Transverse colon (tissue), 4 donors: ENCODE measurements at regions of chr13 and their contacts with region 1.

Region 1: DNA sequence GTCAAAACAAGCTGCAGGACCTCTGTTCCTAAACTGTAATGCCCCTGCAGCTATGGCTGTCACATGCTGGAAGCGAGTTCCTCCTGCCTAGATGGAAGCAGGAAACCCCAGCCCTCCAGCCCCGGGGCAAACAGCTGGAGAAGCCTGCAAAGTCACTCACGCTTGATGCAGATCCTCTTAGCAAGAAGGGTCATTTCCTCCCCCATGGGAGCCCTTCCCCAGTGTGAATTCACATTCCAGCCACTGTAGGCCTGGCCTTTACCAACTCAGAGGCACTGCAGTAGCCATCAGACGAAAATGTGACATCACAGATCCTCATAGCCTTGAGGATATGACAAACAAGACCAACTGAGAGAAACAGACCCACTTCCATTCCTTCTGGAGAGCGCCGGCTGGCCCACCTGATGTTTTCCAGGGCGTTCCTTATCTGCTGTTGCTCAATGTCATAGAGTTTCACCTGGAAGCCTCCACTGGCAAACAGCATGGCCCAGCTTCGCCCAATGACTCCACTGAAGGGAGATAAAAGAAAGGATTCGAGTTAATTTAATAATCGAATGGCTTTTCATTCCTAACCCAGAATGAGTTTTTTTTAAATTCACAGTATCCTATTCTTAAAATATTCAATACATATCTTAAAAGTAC is 13.5 kb downstream of the CRYL1 start:
- DNase-seq: no peak
- H3K4me3 ChIP-seq: no peak overlapping the region
- H3K27ac ChIP-seq: no peak overlapping the region
- H3K4me1 ChIP-seq: no peaks in the 10 kb centered on the region
- H3K27me3 ChIP-seq: no peaks in the 10 kb centered on the region
- CTCF ChIP-seq: no peak
- EP300 ChIP-seq: no peak
- POLR2A ChIP-seq: no peak

Region 2: DNA sequence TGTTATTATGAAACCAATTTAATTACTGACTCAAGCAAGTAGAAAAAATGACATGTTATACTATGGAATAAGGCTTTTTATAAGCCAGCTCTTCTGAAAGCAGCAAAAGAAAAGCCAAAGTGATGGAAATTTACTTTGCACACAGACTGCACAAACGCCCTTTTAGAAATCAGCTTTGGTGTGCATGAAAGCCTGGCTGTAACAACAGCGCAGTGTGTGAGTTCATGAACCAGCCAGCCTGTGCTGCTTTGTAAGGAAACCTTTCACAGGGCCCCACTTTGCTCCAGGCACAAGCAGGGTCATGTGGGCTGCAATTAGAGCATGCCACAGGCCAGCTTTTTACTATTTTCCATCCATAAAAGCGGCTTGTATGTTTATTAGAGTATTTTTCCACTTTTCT is 41.1 kb after region 1 on chr13:
- in situ Hi-C with region 1: no loop called
- intact Hi-C with region 1: no loop called
- DNase-seq: no peak
- H3K4me3 ChIP-seq: no peak overlapping the region
- H3K27ac ChIP-seq: no peak overlapping the region
- H3K4me1 ChIP-seq: peaks cover 0 to 11% (median 0%) of the 10 kb centered on the region in 4 donors
- H3K27me3 ChIP-seq: no peaks in the 10 kb centered on the region
- CTCF ChIP-seq: no peak
- EP300 ChIP-seq: no peak
- POLR2A ChIP-seq: no peak

Region 3: DNA sequence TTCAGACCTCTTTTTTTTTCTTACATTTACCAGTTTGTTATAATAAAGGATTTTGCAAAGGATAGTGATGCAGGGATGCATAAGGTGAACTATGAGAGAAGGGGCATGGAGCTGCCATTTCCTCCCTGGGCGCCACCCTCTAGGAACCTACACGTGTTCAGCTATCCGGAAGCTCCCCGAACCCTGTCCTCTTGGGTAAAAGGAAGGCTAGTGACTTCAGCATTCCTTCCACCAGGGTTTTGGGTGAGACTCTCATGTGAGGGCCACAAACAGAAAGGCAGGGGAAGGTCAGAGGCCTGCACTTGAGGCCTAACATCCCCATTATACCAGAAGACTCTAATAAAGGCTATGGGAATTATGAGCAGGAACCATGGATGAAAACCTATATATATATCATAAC is 112.0 kb after region 1 on chr13:
- in situ Hi-C with region 1: no loop called
- intact Hi-C with region 1: no loop called
- DNase-seq: no peak
- H3K4me3 ChIP-seq: no peak overlapping the region
- H3K27ac ChIP-seq: no peak overlapping the region
- H3K4me1 ChIP-seq: peaks cover 0 to 7% (median 0%) of the 10 kb centered on the region in 4 donors
- H3K27me3 ChIP-seq: no peaks in the 10 kb centered on the region
- CTCF ChIP-seq: no peak
- EP300 ChIP-seq: no peak
- POLR2A ChIP-seq: no peak

Region 4: DNA sequence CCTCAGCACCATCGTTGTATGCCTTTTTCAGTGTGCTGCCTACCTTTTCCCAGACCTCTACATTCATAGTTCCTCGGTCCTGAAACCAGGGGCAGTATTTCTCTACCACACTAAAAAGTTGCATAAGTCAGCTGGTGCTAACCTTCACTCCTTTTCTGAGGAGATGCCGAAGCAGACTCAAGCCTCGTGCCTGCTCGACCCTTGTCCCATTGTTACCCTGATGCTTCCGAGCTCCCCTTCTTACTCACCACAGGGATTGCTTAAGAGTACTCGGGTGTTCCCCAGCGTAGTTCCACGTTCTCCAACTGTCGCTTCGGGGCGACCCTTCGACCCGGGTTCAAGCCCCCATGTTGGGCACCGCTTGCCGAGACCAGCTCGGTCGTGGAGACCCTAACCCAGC is 172.4 kb after region 1 on chr13:
- in situ Hi-C with region 1: loop called in 1 of 4 experiments (anchors 25 kb)
- intact Hi-C with region 1: no loop called
- DNase-seq: no peak
- H3K4me3 ChIP-seq: no peak overlapping the region
- H3K27ac ChIP-seq: no peak overlapping the region
- H3K4me1 ChIP-seq: no peaks in the 10 kb centered on the region
- H3K27me3 ChIP-seq: no peaks in the 10 kb centered on the region
- CTCF ChIP-seq: no peak
- EP300 ChIP-seq: no peak
- POLR2A ChIP-seq: no peak

Region 5: GRCh38 chr13:21137696-21138095 is 625.5 kb after region 1 on chr13:
- in situ Hi-C with region 1: no loop called
- intact Hi-C with region 1: no loop called
- DNase-seq: no peak
- H3K4me3 ChIP-seq: no peak overlapping the region
- H3K27ac ChIP-seq: no peak overlapping the region
- H3K4me1 ChIP-seq: peaks cover 11 to 42% (median 23%) of the 10 kb centered on the region in 4 donors
- H3K27me3 ChIP-seq: no peaks in the 10 kb centered on the region
- CTCF ChIP-seq: no peak
- EP300 ChIP-seq: no peak
- POLR2A ChIP-seq: no peak